Calu3 (cell line): ENCODE measurements at regions of chr13 and their contacts with region 1.

Region 1: DNA sequence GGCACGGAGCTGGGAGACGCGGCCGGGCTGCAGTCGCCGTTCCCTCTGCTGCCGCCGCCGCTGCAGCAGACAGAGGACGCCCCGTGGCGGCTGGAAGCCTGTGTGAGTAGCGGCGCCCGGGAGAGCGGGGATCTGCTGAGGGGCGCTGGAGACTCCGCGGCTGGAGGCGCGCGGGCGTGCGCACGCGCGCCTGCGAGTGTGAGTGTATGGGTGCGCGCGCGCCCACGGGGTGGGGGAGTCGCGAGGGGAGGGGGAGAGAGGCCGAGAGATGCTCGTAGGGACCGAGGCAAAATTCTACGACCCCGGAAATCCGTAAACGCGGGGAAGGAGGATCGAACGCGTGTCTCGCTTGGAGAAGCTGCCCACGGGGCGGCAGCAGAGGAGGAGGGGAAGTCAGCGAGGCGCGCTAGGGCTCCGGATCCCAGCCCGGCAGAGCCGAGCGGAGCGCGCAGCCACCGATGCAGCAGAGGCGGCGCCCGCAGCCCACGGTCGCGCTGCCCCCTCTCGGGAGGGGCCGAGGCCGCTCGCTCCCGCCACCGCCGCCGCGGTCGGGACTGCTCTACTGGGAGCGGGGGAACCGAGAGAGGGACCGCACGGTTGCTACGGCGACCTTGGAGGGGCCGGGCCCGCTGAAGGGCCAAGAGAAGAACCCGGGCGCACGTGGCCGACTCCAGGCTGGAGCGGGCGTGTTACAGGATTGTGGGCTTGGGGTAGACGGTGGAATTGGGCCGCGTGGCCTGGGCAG is at the start of gene ENOX1:
- DNase-seq: peak; percentile 49
- H3K4me3 Mint-ChIP-seq: peak within 1 kb of the TSS; percentile 85
- H3K27ac Mint-ChIP-seq: peak within 1 kb of the TSS; percentile 50
- H3K4me1 Mint-ChIP-seq: peaks cover 10% of the 10 kb centered on the region
- H3K27me3 Mint-ChIP-seq: no peaks in the 10 kb centered on the region
- CTCF ChIP-seq: no peak
- total RNA-seq, gene ENOX1: 1.2 and 1.5 TPM in 2 replicates

Region 2: GRCh38 chr13:43232874-43233266 is 554.1 kb before region 1 on chr13:
- CTCF ChIA-PET with region 1: no interaction called
- intact Hi-C with region 1: no loop called
- DNase-seq: no peak
- H3K4me3 Mint-ChIP-seq: no peak overlapping the region
- H3K27ac Mint-ChIP-seq: no peak overlapping the region
- H3K4me1 Mint-ChIP-seq: no peaks in the 10 kb centered on the region
- H3K27me3 Mint-ChIP-seq: no peaks in the 10 kb centered on the region
- CTCF ChIP-seq: no peak

Region 3: GRCh38 chr13:43303033-43303729 is 483.8 kb before region 1 on chr13:
- CTCF ChIA-PET with region 1: interaction called, 3 read pairs
- intact Hi-C with region 1: loop called (anchors 1 kb)
- DNase-seq: peak; percentile 59
- H3K4me3 Mint-ChIP-seq: no peak overlapping the region
- H3K27ac Mint-ChIP-seq: no peak overlapping the region
- H3K4me1 Mint-ChIP-seq: no peaks in the 10 kb centered on the region
- H3K27me3 Mint-ChIP-seq: peaks cover 13% of the 10 kb centered on the region
- CTCF ChIP-seq: no peak

Region 4: GRCh38 chr13:43387880-43388731 is 398.8 kb before region 1 on chr13:
- CTCF ChIA-PET with region 1: no interaction called
- intact Hi-C with region 1: loop called (anchors 5 kb)
- DNase-seq: peak; percentile 27
- H3K4me3 Mint-ChIP-seq: peak overlapping the region; percentile 70
- H3K27ac Mint-ChIP-seq: no peak overlapping the region
- H3K4me1 Mint-ChIP-seq: peaks cover 20% of the 10 kb centered on the region
- H3K27me3 Mint-ChIP-seq: no peaks in the 10 kb centered on the region
- CTCF ChIP-seq: no peak

Region 5: GRCh38 chr13:43433691-43434141 is 353.2 kb before region 1 on chr13:
- CTCF ChIA-PET with region 1: interaction called, 3 read pairs
- intact Hi-C with region 1: loop called (anchors 10 kb)
- DNase-seq: no peak
- H3K4me3 Mint-ChIP-seq: no peak overlapping the region
- H3K27ac Mint-ChIP-seq: no peak overlapping the region
- H3K4me1 Mint-ChIP-seq: peaks cover 16% of the 10 kb centered on the region
- H3K27me3 Mint-ChIP-seq: no peaks in the 10 kb centered on the region
- CTCF ChIP-seq: no peak

Region 6: GRCh38 chr13:43567608-43568007 is 219.3 kb before region 1 on chr13:
- CTCF ChIA-PET with region 1: no interaction called
- intact Hi-C with region 1: loop called (anchors 5 kb)
- DNase-seq: no peak
- H3K4me3 Mint-ChIP-seq: no peak overlapping the region
- H3K27ac Mint-ChIP-seq: no peak overlapping the region
- H3K4me1 Mint-ChIP-seq: peaks cover 41% of the 10 kb centered on the region
- H3K27me3 Mint-ChIP-seq: no peaks in the 10 kb centered on the region
- CTCF ChIP-seq: no peak